ENCODE measurements at regions of chr15 and their contacts with region 1.

Region 1: DNA sequence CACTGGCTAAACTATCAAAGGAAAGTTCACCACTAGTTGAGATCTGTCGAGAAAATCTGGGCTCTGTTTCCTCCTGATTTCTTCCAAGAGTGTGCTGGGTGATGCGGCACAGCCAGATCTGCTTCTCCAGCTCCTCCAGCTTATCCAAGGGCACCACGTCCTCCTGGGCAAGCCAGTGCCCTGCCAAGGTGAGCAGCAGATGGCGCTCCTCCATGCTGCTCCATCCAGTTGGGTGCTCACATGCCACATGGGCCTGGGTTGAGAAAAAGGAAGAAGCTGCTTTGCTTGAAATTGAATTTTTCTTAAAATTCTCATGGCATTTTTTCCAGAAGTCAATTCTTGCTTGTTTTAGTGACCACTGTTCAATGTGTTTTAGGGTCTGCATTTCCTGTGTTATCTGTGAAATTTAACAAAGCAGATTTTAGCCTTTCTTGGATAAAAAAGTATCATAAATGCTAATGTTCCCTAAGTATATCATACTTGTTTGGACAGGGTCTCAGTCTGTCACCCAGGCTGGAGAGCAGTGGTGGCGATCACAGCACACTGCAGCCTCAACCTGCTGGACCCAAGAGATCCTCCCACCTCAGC is 47.3 kb downstream of the EIF3J start:
- DNase-seq: no peak
- ATAC-seq: peak; percentile 99; the same call in 2 of the 3 replicates
- H3K4me3 ChIP-seq: no peak overlapping the region
- H3K27ac ChIP-seq: no peak overlapping the region
- H3K4me1 ChIP-seq: no peaks in the 10 kb centered on the region
- H3K27me3 ChIP-seq: no peaks in the 10 kb centered on the region
- CTCF ChIP-seq: peak; percentile 63 to 77 (median 75)
- EP300 ChIP-seq: no peak
- POLR2A ChIP-seq: no peak
- RAD21 ChIP-seq: peak; percentile 49

Region 2: GRCh38 chr15:44219073-44219472 is 365.2 kb before region 1 on chr15:
- CTCF ChIA-PET with region 1: no interaction called
- POLR2A ChIA-PET with region 1: no interaction called
- RAD21 ChIA-PET with region 1: no interaction called
- SMC1A ChIA-PET with region 1: no interaction called
- in situ Hi-C with region 1: no loop called
- intact Hi-C with region 1: no loop called
- DNase-seq: no peak
- ATAC-seq: no peak
- H3K4me3 ChIP-seq: no peak overlapping the region
- H3K27ac ChIP-seq: no peak overlapping the region
- H3K4me1 ChIP-seq: no peaks in the 10 kb centered on the region
- H3K27me3 ChIP-seq: no peaks in the 10 kb centered on the region
- CTCF ChIP-seq: no peak; a peak in 1 of 6 replicates
- EP300 ChIP-seq: no peak
- POLR2A ChIP-seq: no peak
- RAD21 ChIP-seq: no peak

Region 3: GRCh38 chr15:44519537-44519936 is 64.7 kb before region 1 on chr15:
- CTCF ChIA-PET with region 1: no interaction called
- POLR2A ChIA-PET with region 1: no interaction called
- RAD21 ChIA-PET with region 1: no interaction called
- SMC1A ChIA-PET with region 1: no interaction called
- in situ Hi-C with region 1: no loop called
- intact Hi-C with region 1: no loop called
- DNase-seq: no peak
- ATAC-seq: no peak
- H3K4me3 ChIP-seq: no peak overlapping the region
- H3K27ac ChIP-seq: no peak overlapping the region
- H3K4me1 ChIP-seq: no peaks in the 10 kb centered on the region
- H3K27me3 ChIP-seq: no peaks in the 10 kb centered on the region
- CTCF ChIP-seq: no peak
- EP300 ChIP-seq: no peak
- POLR2A ChIP-seq: no peak
- RAD21 ChIP-seq: no peak

Region 4: GRCh38 chr15:44545913-44546802 is 38.1 kb before region 1 on chr15:
- CTCF ChIA-PET with region 1: interaction called, 17 read pairs
- POLR2A ChIA-PET with region 1: interaction called, 3 read pairs
- RAD21 ChIA-PET with region 1: interaction called, 3 read pairs
- SMC1A ChIA-PET with region 1: interaction called, 5 read pairs
- in situ Hi-C with region 1: no loop called
- intact Hi-C with region 1: no loop called
- DNase-seq: peak; percentile 41
- ATAC-seq: peak; percentile 89
- H3K4me3 ChIP-seq: peak overlapping the region; percentile 23; the same call in 1 of the 2 replicates
- H3K27ac ChIP-seq: peak overlapping the region; percentile 70
- H3K4me1 ChIP-seq: peaks cover 7% of the 10 kb centered on the region
- H3K27me3 ChIP-seq: no peaks in the 10 kb centered on the region
- CTCF ChIP-seq: peak; percentile 37 to 47 (median 42); a peak in 5 of 6 replicates
- EP300 ChIP-seq: no peak
- POLR2A ChIP-seq: no peak
- RAD21 ChIP-seq: no peak

Region 5: GRCh38 chr15:44573386-44573785 is 10.9 kb before region 1 on chr15:
- CTCF ChIA-PET with region 1: interaction called, 21 read pairs
- POLR2A ChIA-PET with region 1: no interaction called
- RAD21 ChIA-PET with region 1: no interaction called
- SMC1A ChIA-PET with region 1: interaction called, 8 read pairs
- in situ Hi-C with region 1: no loop called
- intact Hi-C with region 1: no loop called
- DNase-seq: no peak
- ATAC-seq: no peak
- H3K4me3 ChIP-seq: no peak overlapping the region
- H3K27ac ChIP-seq: no peak overlapping the region
- H3K4me1 ChIP-seq: no peaks in the 10 kb centered on the region
- H3K27me3 ChIP-seq: no peaks in the 10 kb centered on the region
- CTCF ChIP-seq: no peak
- EP300 ChIP-seq: no peak
- POLR2A ChIP-seq: no peak
- RAD21 ChIP-seq: no peak

Region 6: DNA sequence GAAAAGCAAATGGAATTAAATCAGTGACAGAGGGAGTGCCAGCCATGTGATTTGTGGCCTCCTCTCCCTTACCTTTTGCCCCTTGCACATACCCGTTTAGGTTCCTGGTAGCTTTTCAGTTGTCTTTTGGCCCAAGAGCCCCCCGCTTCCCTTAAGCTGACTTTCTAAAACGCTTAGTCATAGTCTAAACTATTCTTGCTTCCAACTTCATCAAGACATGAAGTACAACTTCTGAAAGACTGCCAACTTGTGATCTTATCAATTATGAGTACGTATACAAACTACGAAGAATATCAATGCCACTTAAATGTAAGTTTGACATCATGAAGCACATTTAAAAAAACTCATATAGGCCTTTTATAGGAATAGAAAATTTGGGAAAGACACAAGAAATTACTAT is 14.6 kb after region 1 on chr15:
- CTCF ChIA-PET with region 1: interaction called, 32 read pairs
- POLR2A ChIA-PET with region 1: no interaction called
- RAD21 ChIA-PET with region 1: interaction called, 4 read pairs
- SMC1A ChIA-PET with region 1: interaction called, 6 read pairs
- in situ Hi-C with region 1: no loop called
- intact Hi-C with region 1: no loop called
- DNase-seq: no peak
- ATAC-seq: no peak
- H3K4me3 ChIP-seq: no peak overlapping the region
- H3K27ac ChIP-seq: no peak overlapping the region
- H3K4me1 ChIP-seq: peaks cover 7% of the 10 kb centered on the region; the same call in 1 of the 2 replicates
- H3K27me3 ChIP-seq: no peaks in the 10 kb centered on the region
- CTCF ChIP-seq: no peak
- EP300 ChIP-seq: no peak
- POLR2A ChIP-seq: no peak
- RAD21 ChIP-seq: no peak

Region 7: GRCh38 chr15:44918136-44918535 is 333.9 kb after region 1 on chr15:
- CTCF ChIA-PET with region 1: no interaction called
- POLR2A ChIA-PET with region 1: interaction called, 3 read pairs
- RAD21 ChIA-PET with region 1: interaction called, 4 read pairs
- SMC1A ChIA-PET with region 1: interaction called, 3 read pairs
- in situ Hi-C with region 1: loop called (anchors 5 kb)
- intact Hi-C with region 1: loop called (anchors 5 kb)
- DNase-seq: no peak
- ATAC-seq: no peak
- H3K4me3 ChIP-seq: no peak overlapping the region
- H3K27ac ChIP-seq: no peak overlapping the region
- H3K4me1 ChIP-seq: no peaks in the 10 kb centered on the region
- H3K27me3 ChIP-seq: no peaks in the 10 kb centered on the region
- CTCF ChIP-seq: no peak
- EP300 ChIP-seq: no peak
- POLR2A ChIP-seq: no peak
- RAD21 ChIP-seq: no peak

Measured in GM12878 (cell line).